Heart right ventricle (tissue), 16 donors: ENCODE measurements at regions of chr16 and their contacts with region 1.

Region 1: GRCh38 chr16:16150117-16150877 is 73.0 kb downstream of the ABCC6 start:
- DNase-seq: peak; percentile 67 to 75
- ATAC-seq: peak; percentile 80 to 94 (median 88)
- H3K4me3 ChIP-seq: peak overlapping the region in 2 of 10 donors; percentile 2 to 14
- H3K27ac ChIP-seq: peak overlapping the region in 8 of 10 donors; percentile 15 to 71 (median 58)
- H3K4me1 ChIP-seq: peaks cover 0 to 16% (median 10%) of the 10 kb centered on the region in 9 donors
- H3K27me3 ChIP-seq: no peaks in the 10 kb centered on the region
- CTCF ChIP-seq: no peak

Region 2: DNA sequence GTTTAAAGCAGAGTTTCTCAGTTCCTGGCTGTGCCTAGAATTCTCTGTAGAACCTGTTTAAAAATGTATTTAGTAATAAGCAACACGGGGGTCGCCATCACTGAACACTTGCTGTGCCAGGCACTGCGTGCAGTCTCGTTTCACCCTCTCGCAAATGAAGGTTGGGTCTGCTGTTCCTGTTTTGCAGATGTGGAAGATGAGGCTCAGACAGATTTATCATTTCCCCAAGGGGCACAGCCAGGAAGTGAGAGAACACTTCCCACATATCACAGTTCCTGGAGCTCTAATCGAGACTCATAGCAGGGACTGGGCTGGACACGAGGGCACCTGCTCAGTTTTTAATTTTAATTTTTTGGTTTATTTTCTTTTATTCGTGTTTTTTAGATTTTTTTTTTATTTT is 49.7 kb before region 1 on chr16:
- intact Hi-C with region 1: no loop called
- DNase-seq: no peak
- ATAC-seq: no peak
- H3K4me3 ChIP-seq: no peak overlapping the region
- H3K27ac ChIP-seq: no peak overlapping the region
- H3K4me1 ChIP-seq: peaks cover 0 to 16% (median 5%) of the 10 kb centered on the region in 9 donors
- H3K27me3 ChIP-seq: no peaks in the 10 kb centered on the region
- CTCF ChIP-seq: no peak

Region 3: DNA sequence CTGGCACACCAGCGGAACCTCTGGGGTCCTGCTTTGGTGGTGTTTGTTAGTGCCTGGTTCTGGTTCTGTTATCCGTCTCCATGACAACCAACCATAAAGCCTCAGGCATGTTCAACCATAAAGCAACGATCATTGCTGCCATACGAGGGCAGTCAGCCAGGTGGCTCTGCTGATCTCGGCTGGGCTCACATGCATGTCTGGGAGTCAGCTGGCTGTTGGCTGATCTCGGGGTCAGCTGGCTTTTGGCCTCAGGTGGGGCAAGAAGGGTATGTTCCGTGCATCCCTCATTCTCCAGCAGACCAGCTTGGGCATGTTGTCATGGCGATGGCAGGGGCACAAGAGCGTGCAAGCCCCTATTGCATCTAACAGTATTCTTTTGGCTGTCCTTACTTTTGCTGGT is 13.2 kb before region 1 on chr16:
- intact Hi-C with region 1: no loop called
- DNase-seq: no peak
- ATAC-seq: no peak
- H3K4me3 ChIP-seq: no peak overlapping the region
- H3K27ac ChIP-seq: no peak overlapping the region
- H3K4me1 ChIP-seq: no peaks in the 10 kb centered on the region
- H3K27me3 ChIP-seq: no peaks in the 10 kb centered on the region
- CTCF ChIP-seq: no peak

Region 4: GRCh38 chr16:16172991-16173390 is 22.7 kb after region 1 on chr16:
- intact Hi-C with region 1: loop called in 1 of 10 experiments (anchors 1 kb)
- DNase-seq: no peak
- ATAC-seq: no peak
- H3K4me3 ChIP-seq: no peak overlapping the region
- H3K27ac ChIP-seq: no peak overlapping the region
- H3K4me1 ChIP-seq: peaks cover 0 to 8% (median 3%) of the 10 kb centered on the region in 9 donors
- H3K27me3 ChIP-seq: no peaks in the 10 kb centered on the region
- CTCF ChIP-seq: no peak